Activated CD8-positive, alpha-beta T cell treated with anti-CD3 and anti-CD28 coated beads for 36 hours (primary cell): ENCODE measurements at regions of chr1 and their contacts with region 1.

Region 1: DNA sequence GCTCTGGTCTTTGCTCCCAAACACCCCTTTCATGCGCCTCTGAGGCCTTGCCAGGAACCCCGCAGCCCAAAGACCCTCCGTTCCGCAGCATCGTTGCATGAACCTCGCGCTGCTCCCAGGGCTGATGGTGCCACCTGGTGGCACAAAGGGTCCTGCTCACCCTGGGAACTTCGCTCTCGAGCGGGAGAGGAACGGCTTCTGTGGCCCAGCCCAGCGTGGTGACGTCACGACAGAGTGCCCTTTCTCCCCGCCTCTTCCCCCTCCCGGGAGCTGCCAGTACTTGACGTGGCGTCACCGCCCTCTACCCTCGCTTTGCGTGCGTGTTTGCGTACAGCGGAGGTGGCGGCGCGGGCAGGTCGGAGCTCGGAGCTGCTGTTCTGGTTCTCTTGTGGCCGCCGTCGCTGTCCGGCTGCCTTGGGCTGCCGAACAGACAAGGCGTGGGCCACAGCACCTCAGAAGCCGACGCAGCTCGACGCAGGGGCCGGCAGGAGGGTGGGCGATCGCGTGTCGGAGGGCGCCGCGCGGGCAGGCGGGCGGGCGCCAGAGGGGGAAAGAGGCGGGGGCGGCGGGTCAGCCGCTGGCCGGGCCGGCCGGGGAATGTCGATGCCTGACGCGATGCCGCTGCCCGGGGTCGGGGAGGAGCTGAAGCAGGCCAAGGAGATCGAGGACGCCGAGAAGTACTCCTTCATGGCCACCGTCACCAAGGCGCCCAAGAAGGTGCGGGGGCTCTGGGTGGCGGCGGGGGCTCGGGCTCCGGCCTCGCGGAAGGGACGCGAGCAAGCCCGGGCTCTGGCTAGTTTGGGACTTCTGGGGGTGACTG is at the start of gene AHCYL1:
- DNase-seq: peak; percentile 100
- ATAC-seq: peak; percentile 99
- H3K4me3 Mint-ChIP-seq: peak within 1 kb of the TSS; percentile 98
- H3K27ac Mint-ChIP-seq: peak within 1 kb of the TSS; percentile 98
- H3K4me1 Mint-ChIP-seq: peaks cover 33% of the 10 kb centered on the region
- H3K27me3 Mint-ChIP-seq: no peaks in the 10 kb centered on the region
- CTCF ChIP-seq: peak; percentile 84
- total RNA-seq, gene AHCYL1: 77.8 to 79.1 TPM

Region 2: GRCh38 chr1:109564194-109564878 is 420.3 kb before region 1 on chr1:
- CTCF ChIA-PET with region 1: no interaction called
- POLR2A ChIA-PET with region 1: no interaction called
- intact Hi-C with region 1: no loop called
- DNase-seq: no peak
- ATAC-seq: no peak
- H3K4me3 Mint-ChIP-seq: no peak overlapping the region
- H3K27ac Mint-ChIP-seq: no peak overlapping the region
- H3K4me1 Mint-ChIP-seq: peaks cover 55% of the 10 kb centered on the region
- H3K27me3 Mint-ChIP-seq: no peaks in the 10 kb centered on the region
- CTCF ChIP-seq: no peak

Region 3: GRCh38 chr1:109636201-109636952 is 348.3 kb before region 1 on chr1:
- CTCF ChIA-PET with region 1: interaction called, 69 read pairs
- POLR2A ChIA-PET with region 1: interaction called, 3 read pairs
- intact Hi-C with region 1: loop called (anchors 5 kb)
- DNase-seq: no peak
- ATAC-seq: no peak
- H3K4me3 Mint-ChIP-seq: no peak overlapping the region
- H3K27ac Mint-ChIP-seq: no peak overlapping the region
- H3K4me1 Mint-ChIP-seq: peaks cover 14% of the 10 kb centered on the region
- H3K27me3 Mint-ChIP-seq: no peaks in the 10 kb centered on the region
- CTCF ChIP-seq: no peak

Region 4: DNA sequence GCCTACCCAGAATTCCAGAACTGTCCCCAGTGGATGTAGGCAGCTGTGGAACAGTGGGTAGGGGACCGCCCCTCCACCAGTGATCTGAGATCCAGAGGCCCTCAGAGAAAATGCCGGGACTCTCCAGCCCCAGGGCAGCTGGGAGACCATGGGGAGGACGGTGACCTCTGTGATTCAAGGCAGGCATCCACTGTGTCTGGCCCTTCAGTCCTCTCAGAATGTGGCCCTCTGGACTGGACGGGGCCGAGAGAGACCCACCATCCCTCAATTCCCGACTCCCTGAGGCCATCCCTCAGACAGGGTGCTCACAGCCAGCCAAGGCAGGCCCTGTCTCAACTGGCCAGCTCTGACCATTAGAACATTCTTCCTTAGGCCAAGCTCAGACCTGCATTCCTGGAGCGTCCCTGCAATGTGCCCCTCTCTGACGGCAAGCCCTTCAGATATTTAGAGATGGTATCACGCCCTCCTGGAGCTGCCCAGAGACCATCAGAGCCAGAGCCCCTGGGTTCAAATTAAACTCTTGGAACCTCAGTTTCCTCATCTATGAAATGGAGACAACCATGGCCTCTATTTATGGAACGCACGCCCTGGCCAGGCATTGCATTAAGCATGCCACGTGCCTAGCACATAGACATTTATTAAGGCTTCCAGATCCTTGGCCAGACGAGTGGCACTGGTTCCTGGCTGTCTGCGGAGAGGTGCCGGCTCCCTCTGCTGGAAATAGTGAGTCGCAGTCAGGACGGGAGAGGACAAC is 211.3 kb before region 1 on chr1:
- CTCF ChIA-PET with region 1: interaction called, 745 read pairs
- POLR2A ChIA-PET with region 1: interaction called, 45 read pairs
- intact Hi-C with region 1: loop called (anchors 1 kb)
- DNase-seq: peak; percentile 84
- ATAC-seq: peak; percentile 86
- H3K4me3 Mint-ChIP-seq: no peak overlapping the region
- H3K27ac Mint-ChIP-seq: no peak overlapping the region
- H3K4me1 Mint-ChIP-seq: no peaks in the 10 kb centered on the region
- H3K27me3 Mint-ChIP-seq: no peaks in the 10 kb centered on the region
- CTCF ChIP-seq: peak; percentile 80

Region 5: DNA sequence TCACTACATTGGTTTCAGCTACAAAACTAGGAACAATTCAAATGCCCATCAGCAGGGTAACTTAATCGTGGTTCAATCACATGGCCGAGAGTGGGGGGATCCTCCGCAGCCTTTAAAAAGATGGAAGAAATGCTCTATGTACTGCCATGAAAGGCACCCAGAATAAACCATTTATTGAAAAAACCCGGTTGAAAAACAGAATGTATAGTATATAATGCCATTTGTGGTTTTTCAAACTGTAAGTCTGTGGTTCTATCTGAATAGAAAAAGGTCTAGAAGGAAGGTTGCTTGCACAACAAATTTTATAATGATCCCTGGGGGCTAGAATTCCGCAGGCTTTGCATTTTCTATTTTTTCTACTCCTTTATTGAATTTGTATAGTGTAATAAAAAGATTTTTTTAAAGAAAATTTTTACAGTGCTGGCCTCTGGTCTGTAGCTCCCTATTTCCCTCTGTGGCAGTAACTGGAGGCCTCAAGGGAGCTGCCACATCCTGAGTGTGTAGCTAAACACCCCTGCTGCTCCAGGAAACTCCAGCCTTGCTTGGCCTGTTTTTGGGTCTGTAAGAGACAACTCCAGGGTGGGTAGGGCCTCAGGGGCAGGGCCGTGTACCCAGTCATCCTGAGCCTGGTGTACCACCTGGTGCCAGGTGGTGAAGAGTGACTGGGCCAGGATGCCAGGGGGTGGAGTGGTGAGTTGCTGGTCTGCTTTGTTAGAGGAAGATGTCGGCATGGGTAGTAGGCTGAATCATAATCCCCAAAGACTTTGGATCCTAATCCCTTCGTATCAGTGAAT is 169.5 kb before region 1 on chr1:
- CTCF ChIA-PET with region 1: interaction called, 10 read pairs
- POLR2A ChIA-PET with region 1: no interaction called
- intact Hi-C with region 1: no loop called
- DNase-seq: no peak
- ATAC-seq: no peak
- H3K4me3 Mint-ChIP-seq: no peak overlapping the region
- H3K27ac Mint-ChIP-seq: no peak overlapping the region
- H3K4me1 Mint-ChIP-seq: no peaks in the 10 kb centered on the region
- H3K27me3 Mint-ChIP-seq: no peaks in the 10 kb centered on the region
- CTCF ChIP-seq: no peak

Region 6: GRCh38 chr1:109917768-109918606 is 66.7 kb before region 1 on chr1:
- CTCF ChIA-PET with region 1: interaction called, 20 read pairs
- POLR2A ChIA-PET with region 1: interaction called, 6 read pairs
- intact Hi-C with region 1: no loop called
- DNase-seq: no peak
- ATAC-seq: no peak
- H3K4me3 Mint-ChIP-seq: no peak overlapping the region
- H3K27ac Mint-ChIP-seq: no peak overlapping the region
- H3K4me1 Mint-ChIP-seq: peaks cover 12% of the 10 kb centered on the region
- H3K27me3 Mint-ChIP-seq: no peaks in the 10 kb centered on the region
- CTCF ChIP-seq: no peak

Region 7: GRCh38 chr1:110011527-110012041 is 26.9 kb after region 1 on chr1:
- CTCF ChIA-PET with region 1: interaction called, 34 read pairs
- POLR2A ChIA-PET with region 1: interaction called, 16 read pairs
- intact Hi-C with region 1: no loop called
- DNase-seq: peak; percentile 40
- ATAC-seq: peak; percentile 92
- H3K4me3 Mint-ChIP-seq: no peak overlapping the region
- H3K27ac Mint-ChIP-seq: no peak overlapping the region
- H3K4me1 Mint-ChIP-seq: no peaks in the 10 kb centered on the region
- H3K27me3 Mint-ChIP-seq: no peaks in the 10 kb centered on the region
- CTCF ChIP-seq: peak; percentile 60

Region 8: DNA sequence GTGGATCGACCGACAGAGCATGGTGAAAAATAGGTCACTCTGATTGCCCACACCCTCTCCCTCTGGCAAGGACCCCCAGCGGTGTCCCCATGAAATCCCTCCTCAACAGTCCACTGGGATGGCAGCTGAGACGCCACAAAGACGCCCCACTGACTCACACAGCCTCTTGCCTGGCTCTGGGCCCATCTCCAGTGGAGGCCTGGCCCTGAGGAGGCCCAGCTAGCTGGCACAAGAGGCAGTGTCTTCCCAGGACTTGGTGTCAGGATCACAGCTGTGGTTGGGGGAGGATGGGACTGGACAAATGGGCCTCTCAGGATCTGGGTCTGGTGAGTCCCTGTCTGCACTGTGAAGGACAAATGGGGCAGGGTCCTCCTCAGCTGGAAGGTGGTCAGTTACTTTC is 81.2 kb after region 1 on chr1:
- CTCF ChIA-PET with region 1: no interaction called
- POLR2A ChIA-PET with region 1: no interaction called
- intact Hi-C with region 1: no loop called
- DNase-seq: no peak
- ATAC-seq: no peak
- H3K4me3 Mint-ChIP-seq: no peak overlapping the region
- H3K27ac Mint-ChIP-seq: no peak overlapping the region
- H3K4me1 Mint-ChIP-seq: peaks cover 12% of the 10 kb centered on the region
- H3K27me3 Mint-ChIP-seq: peaks cover 38% of the 10 kb centered on the region
- CTCF ChIP-seq: no peak